Activated naive CD4-positive, alpha-beta T cell treated with anti-CD3 and anti-CD28 coated beads for 36 hours (primary cell): ENCODE measurements at regions of chr2 and their contacts with region 1.

Region 1: DNA sequence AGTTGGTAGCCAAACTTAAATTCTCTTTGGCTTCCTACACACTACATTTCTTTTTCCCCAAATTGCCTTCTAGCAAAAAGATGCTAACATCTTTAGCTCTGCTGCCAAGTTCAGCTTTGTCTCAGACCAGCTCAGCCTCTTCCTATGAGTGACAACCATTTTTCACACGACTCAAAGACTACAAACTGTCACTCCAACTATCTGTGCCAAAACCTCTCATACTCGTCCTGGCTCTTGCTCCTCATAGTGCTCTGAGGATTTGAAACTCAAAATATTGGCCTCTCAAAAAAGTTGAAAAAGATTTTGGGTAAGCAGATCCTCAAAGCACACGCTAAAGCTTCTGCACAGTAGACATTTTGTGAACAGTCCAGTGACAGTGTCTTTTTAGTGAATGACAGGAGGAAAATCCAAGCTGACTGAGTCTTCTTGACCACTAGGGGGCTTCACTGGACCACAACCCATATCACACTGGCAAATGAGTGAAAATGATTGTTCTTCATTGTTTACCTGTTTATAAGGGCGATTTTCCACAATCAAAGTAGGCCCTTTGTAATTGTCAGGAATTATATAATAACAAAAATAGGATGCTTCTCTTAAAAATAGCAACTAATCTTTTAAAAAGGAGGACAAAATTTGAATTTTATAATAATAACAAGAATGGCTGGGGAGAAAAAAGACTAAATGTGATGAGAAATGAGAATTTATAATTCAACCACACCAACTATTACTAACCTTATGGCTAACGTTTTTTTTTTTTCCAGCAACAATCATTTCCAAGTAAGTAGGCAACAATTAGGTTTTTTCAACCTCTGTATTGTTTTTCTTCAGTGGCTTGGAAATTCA is 85.5 kb upstream of the PGAP1 start:
- DNase-seq: peak; percentile 42
- H3K4me3 Mint-ChIP-seq: no peak overlapping the region
- H3K27ac Mint-ChIP-seq: peak overlapping the region; percentile 81
- H3K4me1 Mint-ChIP-seq: peaks cover 2% of the 10 kb centered on the region
- H3K27me3 Mint-ChIP-seq: no peaks in the 10 kb centered on the region

Region 2: GRCh38 chr2:197184959-197185586 is 173.1 kb after region 1 on chr2:
- CTCF ChIA-PET with region 1: interaction called, 3 read pairs
- intact Hi-C with region 1: loop called (anchors 5 kb)
- DNase-seq: no peak
- H3K4me3 Mint-ChIP-seq: no peak overlapping the region
- H3K27ac Mint-ChIP-seq: no peak overlapping the region
- H3K4me1 Mint-ChIP-seq: peaks cover 73% of the 10 kb centered on the region
- H3K27me3 Mint-ChIP-seq: no peaks in the 10 kb centered on the region

Region 3: GRCh38 chr2:197777823-197778407 is 765.9 kb after region 1 on chr2:
- CTCF ChIA-PET with region 1: no interaction called
- intact Hi-C with region 1: loop called (anchors 5 kb)
- DNase-seq: peak; percentile 52
- H3K4me3 Mint-ChIP-seq: no peak overlapping the region
- H3K27ac Mint-ChIP-seq: no peak overlapping the region
- H3K4me1 Mint-ChIP-seq: no peaks in the 10 kb centered on the region
- H3K27me3 Mint-ChIP-seq: peaks cover 5% of the 10 kb centered on the region